Ovary (tissue), 10 donors: ENCODE measurements at regions of chr3 and their contacts with region 1.

Region 1: GRCh38 chr3:49906004-49906743 is 2.5 kb upstream of the MST1R start:
- DNase-seq: peak; percentile 44 to 68 (median 54)
- H3K4me3 ChIP-seq: no peak overlapping the region
- H3K27ac ChIP-seq: peak overlapping the region; percentile 15 to 29
- H3K4me1 ChIP-seq: peaks cover 3% of the 10 kb centered on the region
- H3K27me3 ChIP-seq: no peaks in the 10 kb centered on the region
- CTCF ChIP-seq: peak in 2 of 3 donors; percentile 62 to 71
- EP300 ChIP-seq: no peak
- POLR2A ChIP-seq: no peak

Region 2: DNA sequence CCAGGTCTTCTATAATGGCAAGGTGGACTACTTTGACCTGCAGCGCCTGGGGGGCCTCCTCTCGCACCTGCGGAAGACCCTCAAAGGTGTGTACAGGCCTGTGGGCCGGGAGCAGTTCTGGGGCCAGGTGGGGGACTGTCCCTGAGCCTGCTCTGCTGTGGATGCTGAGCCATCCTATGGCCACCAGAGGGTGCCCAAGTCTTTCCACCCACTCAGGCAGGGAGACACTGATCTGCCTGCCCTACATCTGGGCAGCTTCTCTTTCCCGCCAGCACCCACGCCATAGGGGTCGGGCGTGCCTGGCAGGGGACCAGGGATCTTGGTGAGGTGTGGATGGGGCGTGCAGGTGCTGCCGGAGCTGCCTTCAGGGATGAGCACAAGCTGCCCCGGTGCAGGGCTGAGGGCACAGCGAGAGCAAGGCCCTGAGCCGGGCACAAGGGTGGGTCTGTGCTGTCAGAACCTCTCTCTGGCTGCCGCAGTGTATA is 202.7 kb before region 1 on chr3:
- intact Hi-C with region 1: loop called in 1 of 4 experiments (anchors 10 kb)
- DNase-seq: peak in 4 of 5 donors; percentile 41 to 69 (median 60)
- H3K4me3 ChIP-seq: no peak overlapping the region
- H3K27ac ChIP-seq: no peak overlapping the region
- H3K4me1 ChIP-seq: no peaks in the 10 kb centered on the region
- H3K27me3 ChIP-seq: no peaks in the 10 kb centered on the region
- CTCF ChIP-seq: peak; percentile 36 to 50 (median 43)
- EP300 ChIP-seq: no peak
- POLR2A ChIP-seq: no peak

Region 3: DNA sequence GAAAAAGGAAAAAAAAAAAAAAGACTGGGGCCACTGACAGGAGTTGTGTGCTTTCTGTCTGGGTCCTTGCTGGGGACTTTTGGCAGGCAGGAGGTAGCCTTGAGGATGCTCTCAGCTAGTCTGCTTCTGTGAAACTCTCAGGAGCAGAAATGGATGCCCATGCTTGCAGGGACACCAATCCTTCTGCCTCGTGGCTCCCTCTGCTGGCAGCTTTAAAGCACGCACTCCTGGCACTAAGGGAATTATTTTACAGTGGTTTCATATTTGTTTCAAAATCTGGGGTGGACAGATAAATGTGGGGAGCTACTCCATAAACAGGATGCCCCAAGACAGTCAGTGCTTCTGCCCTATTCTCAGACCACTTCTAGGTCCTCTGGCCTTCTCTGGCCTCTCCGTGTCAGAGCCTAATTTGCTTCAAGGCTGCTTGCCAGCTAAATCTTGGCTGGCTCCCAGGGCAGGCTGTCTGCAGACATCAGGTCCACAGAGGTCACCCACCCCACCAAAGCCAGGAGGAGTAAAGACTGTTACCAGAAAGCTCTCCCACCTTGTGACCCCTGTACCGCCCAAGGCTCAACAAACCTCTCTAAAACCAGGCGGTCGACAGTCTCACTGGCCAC is 66.9 kb before region 1 on chr3:
- intact Hi-C with region 1: no loop called
- DNase-seq: peak; percentile 80 to 88 (median 85)
- H3K4me3 ChIP-seq: no peak overlapping the region
- H3K27ac ChIP-seq: no peak overlapping the region
- H3K4me1 ChIP-seq: peaks cover 4% of the 10 kb centered on the region
- H3K27me3 ChIP-seq: no peaks in the 10 kb centered on the region
- CTCF ChIP-seq: peak; percentile 85 to 92 (median 91)
- EP300 ChIP-seq: no peak
- POLR2A ChIP-seq: no peak

Region 4: DNA sequence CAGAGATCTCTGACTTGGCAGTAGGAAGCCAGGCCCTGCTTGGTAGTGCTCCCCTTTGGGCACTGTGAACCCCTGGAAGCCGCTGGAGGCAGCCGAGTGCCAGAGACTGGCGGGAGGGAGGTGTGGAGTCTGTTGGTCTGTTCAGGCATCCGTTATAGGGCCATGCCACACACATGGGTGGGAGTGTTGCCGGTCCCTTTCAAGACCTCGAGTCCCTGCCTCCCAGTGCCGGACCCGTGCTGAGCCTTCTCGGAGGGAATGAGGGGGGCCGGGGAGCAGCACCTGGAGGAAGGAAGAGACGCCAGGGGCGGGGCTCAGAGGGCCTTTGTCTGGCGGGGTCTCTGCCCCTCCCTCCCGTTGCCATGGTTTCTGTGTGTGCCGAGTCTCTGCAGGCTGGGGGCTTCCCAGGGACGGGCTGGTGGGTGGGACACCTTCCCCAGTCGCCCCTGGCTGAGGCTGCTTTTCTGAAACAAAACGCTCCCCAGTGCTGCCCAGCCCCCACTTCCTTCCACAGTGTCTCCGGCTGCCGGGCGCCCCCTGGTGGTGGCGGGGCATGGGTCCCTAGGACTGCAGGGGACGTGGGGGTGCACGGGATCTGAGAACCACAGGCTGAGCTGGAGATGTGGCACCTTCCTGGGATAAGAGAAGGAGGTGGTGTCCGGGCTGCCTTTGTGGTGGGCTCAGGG is 339.8 kb after region 1 on chr3:
- intact Hi-C with region 1: no loop called
- DNase-seq: peak; percentile 89 to 94 (median 93)
- H3K4me3 ChIP-seq: peak overlapping the region; percentile 41
- H3K27ac ChIP-seq: peak overlapping the region; percentile 64 to 82
- H3K4me1 ChIP-seq: peaks cover 31% of the 10 kb centered on the region
- H3K27me3 ChIP-seq: no peaks in the 10 kb centered on the region
- CTCF ChIP-seq: peak; percentile 96 to 98 (median 97)
- EP300 ChIP-seq: no peak
- POLR2A ChIP-seq: no peak

Region 5: DNA sequence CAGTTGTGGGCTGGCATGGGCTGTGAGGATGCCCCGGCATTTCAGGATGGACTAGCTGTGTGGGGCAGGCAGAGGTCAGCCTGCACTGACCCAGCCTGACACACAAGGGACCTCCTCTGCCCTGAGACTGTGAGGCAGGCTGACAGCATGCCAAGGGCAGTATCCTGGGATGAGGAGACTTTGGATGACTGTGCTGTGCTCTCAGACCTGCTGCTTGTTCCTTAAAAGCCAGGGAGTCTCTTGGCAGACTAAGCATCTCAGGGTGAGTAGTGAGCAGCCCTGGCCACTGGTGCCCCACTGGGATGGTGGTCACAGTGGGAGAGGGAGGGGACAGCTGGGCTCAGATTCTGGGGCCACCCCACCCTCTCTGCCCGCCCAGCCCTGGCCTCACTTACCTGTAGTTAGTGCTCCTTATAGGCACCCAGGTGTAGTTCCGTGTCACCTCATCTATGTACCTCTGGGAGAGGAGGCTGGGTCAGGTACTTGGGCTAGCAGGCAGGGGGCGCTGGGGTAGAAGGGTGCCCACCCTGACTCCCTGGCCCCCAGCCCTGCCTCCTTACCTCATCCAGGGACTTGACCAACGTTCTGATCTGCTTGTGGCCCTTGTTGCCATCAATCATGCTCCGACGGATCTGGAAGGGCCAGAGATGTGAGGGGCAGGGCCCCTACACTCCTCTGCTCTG is 469.2 kb after region 1 on chr3:
- intact Hi-C with region 1: no loop called
- DNase-seq: no peak
- H3K4me3 ChIP-seq: no peak overlapping the region
- H3K27ac ChIP-seq: no peak overlapping the region
- H3K4me1 ChIP-seq: no peaks in the 10 kb centered on the region
- H3K27me3 ChIP-seq: no peaks in the 10 kb centered on the region
- CTCF ChIP-seq: no peak
- EP300 ChIP-seq: no peak
- POLR2A ChIP-seq: no peak